Posterior cingulate gyrus (tissue), 11 donors: ENCODE measurements at regions of chr1 and their contacts with region 1.

Region 1: DNA sequence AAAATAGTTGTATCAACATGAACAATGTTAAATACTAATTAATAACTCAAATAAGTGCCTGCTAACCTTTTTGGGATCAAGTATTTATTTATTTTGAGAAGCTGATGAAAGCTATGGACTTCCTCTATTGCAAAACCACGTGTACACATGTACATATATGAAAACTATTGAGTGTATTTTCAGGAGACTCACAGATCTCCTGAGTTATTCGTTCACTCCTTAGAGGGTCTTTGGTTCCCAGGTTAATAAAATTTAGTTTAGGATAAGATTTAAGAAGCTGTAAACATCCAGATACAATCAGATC is 130.5 kb downstream of the DISC1 start:
- DNase-seq: no peak

Region 2: GRCh38 chr1:231806623-231807495 is 49.8 kb after region 1 on chr1:
- intact Hi-C with region 1: loop called (anchors 2 kb)
- DNase-seq: peak in 8 of 10 donors; percentile 34 to 93 (median 50)